Activated CD4-positive, alpha-beta memory T cell treated with anti-CD3 and anti-CD28 coated beads, Interleukin-2, amount 10 ng/mL, durations not matched to agents 7 days and 5 days (primary cell): ENCODE measurements at regions of chr9 and their contacts with region 1.

Region 1: GRCh38 chr9:129932303-129933151 is 97.3 kb downstream of the USP20 start:
- DNase-seq: no peak
- H3K4me3 Mint-ChIP-seq: peak overlapping the region; percentile 63
- H3K27ac Mint-ChIP-seq: peak overlapping the region; percentile 77
- H3K4me1 Mint-ChIP-seq: peaks cover 62% of the 10 kb centered on the region
- H3K27me3 Mint-ChIP-seq: no peaks in the 10 kb centered on the region

Region 2: GRCh38 chr9:129889941-129890717 is 42.4 kb before region 1 on chr9:
- CTCF ChIA-PET with region 1: interaction called, 10 read pairs
- POLR2A ChIA-PET with region 1: interaction called, 26 read pairs
- DNase-seq: peak; percentile 86
- H3K4me3 Mint-ChIP-seq: peak overlapping the region; percentile 80
- H3K27ac Mint-ChIP-seq: peak overlapping the region; percentile 100
- H3K4me1 Mint-ChIP-seq: peaks cover 89% of the 10 kb centered on the region
- H3K27me3 Mint-ChIP-seq: no peaks in the 10 kb centered on the region

Region 3: GRCh38 chr9:129900263-129901027 is 32.1 kb before region 1 on chr9:
- CTCF ChIA-PET with region 1: no interaction called
- POLR2A ChIA-PET with region 1: interaction called, 13 read pairs
- DNase-seq: no peak
- H3K4me3 Mint-ChIP-seq: no peak overlapping the region
- H3K27ac Mint-ChIP-seq: no peak overlapping the region
- H3K4me1 Mint-ChIP-seq: peaks cover 72% of the 10 kb centered on the region
- H3K27me3 Mint-ChIP-seq: no peaks in the 10 kb centered on the region

Region 4: DNA sequence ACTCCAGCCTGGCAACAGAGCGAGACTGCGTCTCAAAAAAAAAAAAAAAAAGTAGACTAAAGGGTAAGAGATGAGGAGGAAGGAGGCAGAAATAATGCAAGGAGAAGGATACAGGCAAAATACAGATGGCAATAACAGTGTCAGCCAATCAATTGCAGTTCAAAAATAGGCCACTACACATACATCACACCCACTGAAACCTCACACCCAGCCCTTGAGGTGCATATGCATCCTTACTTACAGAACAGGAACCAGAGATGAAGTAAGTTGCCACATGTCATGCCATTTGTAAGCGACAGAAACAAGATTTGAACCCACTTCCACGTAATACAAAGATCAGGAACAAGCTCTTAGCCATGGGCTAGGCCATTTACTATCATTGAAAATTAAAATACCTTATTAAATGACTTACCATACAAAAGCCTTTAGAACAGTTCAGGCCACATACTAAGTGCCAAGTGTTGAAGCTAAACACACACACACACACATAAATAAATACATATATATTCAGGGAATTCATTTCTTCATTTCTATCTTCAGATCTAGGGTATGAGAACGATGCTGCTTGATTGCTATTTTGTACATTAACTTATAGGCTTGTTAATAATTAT is 12.1 kb after region 1 on chr9:
- CTCF ChIA-PET with region 1: interaction called, 7 read pairs
- POLR2A ChIA-PET with region 1: interaction called, 40 read pairs
- DNase-seq: peak; percentile 76
- H3K4me3 Mint-ChIP-seq: peak overlapping the region; percentile 1
- H3K27ac Mint-ChIP-seq: peak overlapping the region; percentile 80
- H3K4me1 Mint-ChIP-seq: peaks cover 49% of the 10 kb centered on the region
- H3K27me3 Mint-ChIP-seq: no peaks in the 10 kb centered on the region

Region 5: GRCh38 chr9:130327070-130327780 is 394.7 kb after region 1 on chr9:
- CTCF ChIA-PET with region 1: no interaction called
- POLR2A ChIA-PET with region 1: no interaction called
- DNase-seq: no peak
- H3K4me3 Mint-ChIP-seq: no peak overlapping the region
- H3K27ac Mint-ChIP-seq: no peak overlapping the region
- H3K4me1 Mint-ChIP-seq: no peaks in the 10 kb centered on the region
- H3K27me3 Mint-ChIP-seq: peaks cover 19% of the 10 kb centered on the region